Caco-2 (cell line): ENCODE measurements at regions of chr3 and their contacts with region 1.

Region 1: GRCh38 chr3:25648107-25648535 is 16.6 kb downstream of the TOP2B start:
- DNase-seq: peak; percentile 76 to 84
- H3K4me3 ChIP-seq: no peak overlapping the region
- H3K4me3 Mint-ChIP-seq: no peak overlapping the region
- H3K27ac Mint-ChIP-seq: no peak overlapping the region
- H3K4me1 ChIP-seq: no peaks in the 10 kb centered on the region
- H3K4me1 Mint-ChIP-seq: peaks cover 8% of the 10 kb centered on the region
- H3K27me3 ChIP-seq: no peaks in the 10 kb centered on the region
- H3K27me3 Mint-ChIP-seq: no peaks in the 10 kb centered on the region
- CTCF ChIP-seq: peak; percentile 79 to 87

Region 2: DNA sequence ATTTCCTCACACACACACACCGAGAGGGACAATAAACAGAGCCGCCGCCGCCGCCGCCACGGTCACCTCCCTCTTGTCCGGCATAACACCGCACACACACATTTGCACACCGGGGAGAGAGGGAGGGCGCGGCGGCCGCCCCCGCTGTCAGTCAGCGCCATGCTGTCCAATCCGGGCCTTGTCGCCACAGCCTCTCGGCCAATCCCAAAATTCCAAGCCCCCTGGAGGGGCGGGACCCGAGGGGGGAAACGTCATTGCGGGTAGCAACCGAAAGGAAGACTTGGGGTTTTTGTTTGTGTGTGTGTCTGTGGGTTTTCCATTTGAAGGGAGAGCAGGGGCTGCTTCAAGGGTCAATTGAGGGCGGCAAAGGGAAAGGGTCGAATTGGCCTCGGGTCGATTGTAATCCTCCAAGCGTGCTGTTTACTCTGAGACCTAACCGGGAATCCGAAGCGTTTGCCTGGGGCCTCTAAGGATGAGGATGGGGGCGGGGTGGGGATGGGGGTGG is 16.7 kb after region 1 on chr3 and contains the start of gene TOP2B:
- CTCF ChIA-PET with region 1: no interaction called
- POLR2A ChIA-PET with region 1: no interaction called
- intact Hi-C with region 1: loop called (anchors 1 kb)
- DNase-seq: peak; percentile 94 to 95
- H3K4me3 ChIP-seq: peak within 1 kb of the TSS; percentile 86
- H3K4me3 Mint-ChIP-seq: peak within 1 kb of the TSS; percentile 94
- H3K27ac Mint-ChIP-seq: peak within 1 kb of the TSS; percentile 99
- H3K4me1 ChIP-seq: no peaks in the 10 kb centered on the region
- H3K4me1 Mint-ChIP-seq: peaks cover 7% of the 10 kb centered on the region
- H3K27me3 ChIP-seq: no peaks in the 10 kb centered on the region
- H3K27me3 Mint-ChIP-seq: peaks cover 7% of the 10 kb centered on the region
- CTCF ChIP-seq: no peak
- total RNA-seq, gene TOP2B: 82.4 and 83.1 TPM in 2 replicates

Region 3: GRCh38 chr3:25782938-25783660 is 135.0 kb after region 1 on chr3 and contains the start of gene NGLY1:
- CTCF ChIA-PET with region 1: interaction called, 10 read pairs
- POLR2A ChIA-PET with region 1: no interaction called
- intact Hi-C with region 1: no loop called
- DNase-seq: peak; percentile 82 to 89
- H3K4me3 ChIP-seq: peak within 1 kb of the TSS; percentile 92
- H3K4me3 Mint-ChIP-seq: peak within 1 kb of the TSS; percentile 75
- H3K27ac Mint-ChIP-seq: peak within 1 kb of the TSS; percentile 45
- H3K4me1 ChIP-seq: peaks cover 10% of the 10 kb centered on the region
- H3K4me1 Mint-ChIP-seq: peaks cover 18% of the 10 kb centered on the region
- H3K27me3 ChIP-seq: no peaks in the 10 kb centered on the region
- H3K27me3 Mint-ChIP-seq: no peaks in the 10 kb centered on the region
- CTCF ChIP-seq: no peak
- total RNA-seq, gene NGLY1: 27.1 and 28.7 TPM in 2 replicates

Region 4: GRCh38 chr3:25856902-25857518 is 208.9 kb after region 1 on chr3:
- CTCF ChIA-PET with region 1: interaction called, 13 read pairs
- POLR2A ChIA-PET with region 1: no interaction called
- intact Hi-C with region 1: loop called (anchors 1 kb)
- DNase-seq: peak in 1 of 2 experiments; percentile 31
- H3K4me3 ChIP-seq: no peak overlapping the region
- H3K4me3 Mint-ChIP-seq: no peak overlapping the region
- H3K27ac Mint-ChIP-seq: no peak overlapping the region
- H3K4me1 ChIP-seq: no peaks in the 10 kb centered on the region
- H3K4me1 Mint-ChIP-seq: no peaks in the 10 kb centered on the region
- H3K27me3 ChIP-seq: no peaks in the 10 kb centered on the region
- H3K27me3 Mint-ChIP-seq: peaks cover 3% of the 10 kb centered on the region
- CTCF ChIP-seq: peak; percentile 36 to 78

Region 5: GRCh38 chr3:25962249-25962648 is 314.1 kb after region 1 on chr3:
- CTCF ChIA-PET with region 1: interaction called, 7 read pairs
- POLR2A ChIA-PET with region 1: no interaction called
- intact Hi-C with region 1: loop called (anchors 2 kb)
- DNase-seq: peak in 1 of 2 experiments; percentile 36
- H3K4me3 ChIP-seq: no peak overlapping the region
- H3K4me3 Mint-ChIP-seq: no peak overlapping the region
- H3K27ac Mint-ChIP-seq: no peak overlapping the region
- H3K4me1 ChIP-seq: no peaks in the 10 kb centered on the region
- H3K4me1 Mint-ChIP-seq: no peaks in the 10 kb centered on the region
- H3K27me3 ChIP-seq: no peaks in the 10 kb centered on the region
- H3K27me3 Mint-ChIP-seq: no peaks in the 10 kb centered on the region
- CTCF ChIP-seq: peak; percentile 34 to 61

Region 6: GRCh38 chr3:26712211-26713026 is 1064.3 kb after region 1 on chr3:
- CTCF ChIA-PET with region 1: interaction called, 3 read pairs
- POLR2A ChIA-PET with region 1: no interaction called
- intact Hi-C with region 1: loop called (anchors 5 kb)
- DNase-seq: peak in 1 of 2 experiments; percentile 27
- H3K4me3 ChIP-seq: no peak overlapping the region
- H3K4me3 Mint-ChIP-seq: no peak overlapping the region
- H3K27ac Mint-ChIP-seq: no peak overlapping the region
- H3K4me1 ChIP-seq: no peaks in the 10 kb centered on the region
- H3K4me1 Mint-ChIP-seq: no peaks in the 10 kb centered on the region
- H3K27me3 ChIP-seq: no peaks in the 10 kb centered on the region
- H3K27me3 Mint-ChIP-seq: no peaks in the 10 kb centered on the region
- CTCF ChIP-seq: peak; percentile 38 to 53